Aorta (tissue), 5 donors: ENCODE measurements at regions of chr11 and their contacts with region 1.

Region 1: DNA sequence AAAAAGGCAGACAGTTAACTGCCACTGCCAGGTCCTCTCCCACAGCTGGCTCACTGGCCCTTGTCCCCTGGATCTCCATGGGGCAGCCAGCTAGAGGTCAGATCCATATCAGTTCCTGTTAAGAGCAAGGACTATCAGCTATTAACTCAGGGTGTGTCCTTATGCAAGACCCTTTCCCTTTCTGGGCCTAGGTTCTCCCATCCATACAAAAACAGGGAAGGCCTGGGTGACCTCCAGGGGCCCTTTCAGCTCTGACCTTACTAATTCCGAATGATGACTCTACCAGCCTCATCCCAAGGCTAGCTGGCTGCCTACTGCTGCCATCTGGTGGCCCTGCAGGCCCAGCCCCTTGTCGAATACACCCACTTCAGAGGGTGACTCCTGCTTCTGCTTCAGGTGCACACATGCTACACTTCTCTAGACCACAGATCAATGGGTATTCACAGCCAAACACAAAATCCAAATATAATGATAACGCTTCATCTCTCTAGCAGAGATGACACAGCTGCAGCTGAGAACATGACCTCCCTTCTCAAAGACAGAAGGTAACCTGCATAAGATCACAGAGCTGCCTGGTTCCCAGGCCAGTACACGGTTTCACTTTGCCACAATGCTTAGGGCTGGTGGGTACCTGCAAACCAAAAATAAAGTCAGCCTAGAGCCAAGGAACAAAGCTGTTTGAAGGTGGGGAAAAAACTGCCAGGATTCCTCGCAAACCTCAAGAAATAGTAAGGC is 34.1 kb downstream of the SERGEF start:
- DNase-seq: no peak
- ATAC-seq: peak; percentile 49
- H3K4me3 ChIP-seq: no peak overlapping the region
- H3K27ac ChIP-seq: no peak overlapping the region
- H3K4me1 ChIP-seq: no peaks in the 10 kb centered on the region
- H3K27me3 ChIP-seq: no peaks in the 10 kb centered on the region

Region 2: DNA sequence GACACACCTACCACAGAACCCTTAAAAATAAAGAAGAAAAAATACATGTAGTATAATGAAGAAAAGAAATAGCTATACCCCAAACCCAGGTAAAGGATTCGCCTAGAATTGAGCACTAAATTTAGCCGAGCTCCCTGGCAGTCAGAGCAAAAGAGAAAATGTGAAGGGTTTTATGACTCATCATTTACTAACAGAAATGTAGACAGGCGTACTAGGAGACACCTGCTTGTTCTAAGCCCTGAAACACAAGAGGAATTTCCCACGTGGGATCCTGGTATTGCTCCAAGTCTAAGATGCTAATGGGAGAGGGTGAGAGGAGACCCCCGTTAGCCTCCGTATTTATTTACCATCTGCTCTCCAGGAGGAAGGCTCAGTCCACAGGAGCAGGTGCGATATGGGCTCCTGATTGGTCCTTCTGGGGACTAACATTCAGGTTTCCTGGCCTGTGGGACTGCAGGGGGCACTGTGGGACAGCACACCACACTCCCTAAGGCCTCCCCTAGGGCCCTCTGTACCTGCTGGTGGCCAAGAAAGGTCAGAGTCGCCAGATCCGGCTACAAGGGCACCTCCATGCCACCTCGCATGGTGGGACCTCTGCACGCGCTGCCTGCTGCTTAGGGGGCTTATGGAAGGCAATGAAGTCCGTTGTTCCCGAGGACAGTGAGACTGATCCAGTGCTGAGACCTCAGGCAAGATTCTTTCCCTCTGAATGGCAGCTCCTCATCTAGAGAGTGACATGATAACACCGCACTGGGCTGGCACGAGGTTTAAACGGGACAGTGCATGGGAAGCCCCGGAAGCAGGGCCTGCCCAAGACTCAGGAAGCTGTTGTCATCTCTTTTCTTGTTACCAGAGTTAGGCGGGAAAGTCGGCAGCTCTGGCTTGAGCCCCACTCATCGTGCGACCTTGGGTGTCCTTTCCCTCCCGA is 218.4 kb before region 1 on chr11:
- intact Hi-C with region 1: loop called in 1 of 2 experiments (anchors 10 kb)
- DNase-seq: no peak
- ATAC-seq: peak; percentile 61
- H3K4me3 ChIP-seq: no peak overlapping the region
- H3K27ac ChIP-seq: no peak overlapping the region
- H3K4me1 ChIP-seq: no peaks in the 10 kb centered on the region
- H3K27me3 ChIP-seq: no peaks in the 10 kb centered on the region

Region 3: DNA sequence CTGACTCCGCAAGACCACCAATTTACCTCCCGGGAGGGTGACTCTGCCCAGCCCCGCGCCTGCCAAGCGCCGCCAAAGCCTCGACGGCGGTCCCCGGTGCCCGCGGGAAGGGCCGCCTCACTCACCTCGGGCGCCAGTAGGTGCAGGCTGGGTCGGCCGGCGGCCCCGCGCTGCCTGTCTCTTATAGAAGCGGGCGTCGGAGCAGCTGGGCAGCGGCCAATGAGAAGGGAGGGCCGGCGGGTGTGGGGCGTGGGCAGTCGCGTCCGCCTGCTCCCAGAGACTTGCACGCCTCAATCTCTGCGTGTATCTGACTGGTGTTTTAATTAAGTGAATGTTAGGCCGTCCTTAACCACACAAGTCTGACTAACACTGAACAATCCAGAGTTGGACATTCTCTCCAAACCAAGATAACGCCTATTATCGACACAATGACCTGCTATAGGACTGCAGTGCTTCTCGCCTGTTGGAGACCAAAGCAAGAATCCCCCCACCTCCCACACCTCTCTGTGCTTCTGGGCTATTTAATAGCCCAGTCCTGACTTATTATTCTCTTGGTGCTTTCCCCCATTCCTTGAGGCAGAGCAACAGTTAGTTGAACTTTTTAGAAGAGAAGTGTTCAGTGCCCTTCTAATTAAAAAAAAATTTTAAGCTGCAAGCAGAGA is 67.5 kb after region 1 on chr11 and contains the start of gene TPH1:
- intact Hi-C with region 1: no loop called
- DNase-seq: peak; percentile 71 to 86
- ATAC-seq: peak; percentile 85
- H3K4me3 ChIP-seq: peak within 1 kb of the TSS; percentile 57 to 81
- H3K27ac ChIP-seq: peak within 1 kb of the TSS; percentile 67 to 68
- H3K4me1 ChIP-seq: no peaks in the 10 kb centered on the region
- H3K27me3 ChIP-seq: no peaks in the 10 kb centered on the region
- total RNA-seq, gene TPH1: 14.9 to 20.0 TPM